ENCODE measurements at regions of chr12 and their contacts with region 1.

Region 1: DNA sequence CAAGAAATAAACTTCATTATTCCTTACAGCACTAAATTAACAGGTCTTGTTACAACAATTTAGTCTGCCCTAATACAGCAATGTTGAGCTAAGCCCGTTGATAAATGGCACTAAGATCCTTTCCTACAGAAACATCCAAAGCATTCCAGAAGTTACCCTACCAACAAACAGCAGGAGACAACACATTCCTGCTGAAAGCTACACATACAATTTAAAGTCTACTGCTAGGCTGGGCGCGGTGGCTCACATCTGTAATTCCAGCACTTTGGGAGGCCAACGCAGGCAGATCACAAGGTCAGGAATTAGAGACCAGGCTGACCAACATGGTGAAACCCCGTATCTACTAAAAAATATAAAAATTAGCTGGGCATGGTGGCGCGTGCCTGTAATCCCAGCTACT is 68.9 kb downstream of the NDUFA12 start:
- DNase-seq: no peak
- ATAC-seq: no peak
- H3K4me3 ChIP-seq: no peak overlapping the region
- H3K27ac ChIP-seq: no peak overlapping the region
- H3K4me1 ChIP-seq: no peaks in the 10 kb centered on the region
- H3K27me3 ChIP-seq: no peaks in the 10 kb centered on the region; the same call in 1 of the 2 replicates
- CTCF ChIP-seq: no peak

Region 2: DNA sequence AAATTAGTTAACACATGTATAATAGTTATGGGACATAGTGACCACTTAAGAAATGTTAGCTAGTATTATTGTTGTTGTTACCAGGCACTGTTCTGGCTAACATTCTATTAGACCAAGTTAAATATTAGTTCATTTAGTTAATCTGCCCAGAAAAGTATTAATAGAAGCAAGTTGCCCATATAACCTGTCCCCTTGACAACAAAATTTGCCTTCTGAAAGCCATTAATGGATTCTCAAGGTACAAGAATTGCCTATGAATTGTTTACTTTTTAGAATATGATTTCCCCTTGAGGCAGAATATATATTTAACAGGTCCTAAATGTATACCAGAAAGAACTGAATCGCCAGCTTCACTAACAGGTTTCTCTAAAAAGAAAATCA is 116.9 kb before region 1 on chr12:
- CTCF ChIA-PET with region 1: no interaction called
- POLR2A ChIA-PET with region 1: no interaction called
- in situ Hi-C with region 1: no loop called
- intact Hi-C with region 1: no loop called
- DNase-seq: no peak
- ATAC-seq: no peak
- H3K4me3 ChIP-seq: no peak overlapping the region
- H3K27ac ChIP-seq: no peak overlapping the region
- H3K4me1 ChIP-seq: no peaks in the 10 kb centered on the region
- H3K27me3 ChIP-seq: no peaks in the 10 kb centered on the region
- CTCF ChIP-seq: no peak

Region 3: GRCh38 chr12:94909663-94910062 is 25.0 kb before region 1 on chr12:
- CTCF ChIA-PET with region 1: no interaction called
- POLR2A ChIA-PET with region 1: interaction called, 12 read pairs
- in situ Hi-C with region 1: no loop called
- intact Hi-C with region 1: no loop called
- DNase-seq: no peak
- ATAC-seq: no peak
- H3K4me3 ChIP-seq: no peak overlapping the region
- H3K27ac ChIP-seq: no peak overlapping the region
- H3K4me1 ChIP-seq: no peaks in the 10 kb centered on the region
- H3K27me3 ChIP-seq: no peaks in the 10 kb centered on the region
- CTCF ChIP-seq: no peak

Region 4: DNA sequence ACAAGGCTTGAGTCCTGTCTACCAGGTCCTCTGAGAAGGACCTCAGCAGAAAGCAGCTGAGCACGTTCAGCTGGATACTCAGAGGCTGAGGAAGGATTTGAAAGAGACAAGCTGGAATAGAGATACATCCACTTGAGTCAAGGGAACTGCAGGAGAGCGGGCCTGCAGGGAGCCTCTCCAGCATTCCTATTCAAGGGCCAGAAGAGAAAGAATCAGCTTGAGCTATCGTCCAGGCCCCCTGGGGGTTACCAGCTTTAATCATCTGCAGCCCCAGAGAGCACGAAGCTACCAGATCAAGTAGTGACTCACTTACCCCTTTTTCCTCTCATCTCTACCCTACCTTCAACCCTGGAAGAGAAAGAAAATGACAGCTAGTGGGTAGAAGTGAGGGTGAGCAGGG is 12.1 kb before region 1 on chr12:
- CTCF ChIA-PET with region 1: no interaction called
- POLR2A ChIA-PET with region 1: no interaction called
- in situ Hi-C with region 1: no loop called
- intact Hi-C with region 1: no loop called
- DNase-seq: no peak
- ATAC-seq: no peak
- H3K4me3 ChIP-seq: no peak overlapping the region
- H3K27ac ChIP-seq: no peak overlapping the region
- H3K4me1 ChIP-seq: no peaks in the 10 kb centered on the region
- H3K27me3 ChIP-seq: no peaks in the 10 kb centered on the region
- CTCF ChIP-seq: no peak